ENCODE measurements at regions of chr9 and their contacts with region 1.

Region 1: DNA sequence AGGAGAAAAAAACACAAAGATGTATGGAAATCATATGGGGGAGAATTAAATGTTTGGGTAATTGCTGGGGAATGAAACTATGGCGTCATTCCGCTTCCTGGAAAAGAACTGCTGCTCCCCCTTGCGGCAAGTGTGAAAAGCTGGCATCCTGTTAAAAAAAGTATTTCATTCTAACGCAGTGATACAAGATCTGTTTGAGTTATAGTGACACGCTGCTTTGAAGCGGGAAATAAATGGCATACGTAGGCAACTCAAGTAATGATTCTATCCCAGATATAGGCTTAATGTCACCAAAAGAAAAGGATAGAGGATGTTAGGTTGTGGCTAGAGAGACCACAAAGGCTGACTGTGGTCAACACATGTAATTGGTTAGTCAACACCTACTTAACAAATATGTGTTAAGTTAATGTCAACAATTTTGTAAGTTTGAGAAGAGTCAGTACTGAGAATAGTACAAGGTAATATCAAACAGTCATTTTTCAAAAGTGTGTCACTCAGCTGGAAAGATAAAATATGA is 70.2 kb upstream of the ALDH1A1 start:
- DNase-seq: no peak
- H3K4me3 Mint-ChIP-seq: no peak overlapping the region
- H3K27ac Mint-ChIP-seq: no peak overlapping the region
- H3K4me1 Mint-ChIP-seq: peaks cover 10% of the 10 kb centered on the region
- H3K27me3 Mint-ChIP-seq: peaks cover 11% of the 10 kb centered on the region

Region 2: DNA sequence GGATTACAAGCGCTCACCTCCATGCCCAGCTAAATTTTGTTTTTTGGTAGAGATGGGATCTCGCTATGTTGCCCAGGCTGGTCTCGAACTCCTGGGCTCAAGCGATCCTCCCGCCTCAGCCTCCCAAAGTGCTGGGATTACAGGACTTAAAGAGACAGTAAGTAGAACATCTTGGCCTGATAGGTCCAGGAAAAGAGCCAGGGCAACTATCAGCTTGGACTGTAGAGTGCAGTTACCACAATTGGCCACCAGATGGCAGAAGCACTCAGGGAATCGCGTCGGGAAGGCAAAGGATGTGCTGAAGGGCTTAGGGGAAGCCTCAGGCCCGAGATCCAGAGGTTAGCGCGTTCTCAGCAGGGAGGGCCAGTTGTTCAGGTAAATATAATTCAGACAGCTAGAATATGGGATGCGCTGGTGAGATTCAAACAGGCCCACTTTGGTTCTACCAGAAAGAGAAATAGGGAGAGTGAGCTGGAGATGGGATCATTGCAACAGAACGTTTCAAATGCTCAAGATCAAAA is 984.1 kb before region 1 on chr9:
- intact Hi-C with region 1: loop called (anchors 5 kb)
- DNase-seq: peak; percentile 36
- H3K4me3 Mint-ChIP-seq: no peak overlapping the region
- H3K27ac Mint-ChIP-seq: no peak overlapping the region
- H3K4me1 Mint-ChIP-seq: peaks cover 6% of the 10 kb centered on the region
- H3K27me3 Mint-ChIP-seq: peaks cover 11% of the 10 kb centered on the region

Region 3: DNA sequence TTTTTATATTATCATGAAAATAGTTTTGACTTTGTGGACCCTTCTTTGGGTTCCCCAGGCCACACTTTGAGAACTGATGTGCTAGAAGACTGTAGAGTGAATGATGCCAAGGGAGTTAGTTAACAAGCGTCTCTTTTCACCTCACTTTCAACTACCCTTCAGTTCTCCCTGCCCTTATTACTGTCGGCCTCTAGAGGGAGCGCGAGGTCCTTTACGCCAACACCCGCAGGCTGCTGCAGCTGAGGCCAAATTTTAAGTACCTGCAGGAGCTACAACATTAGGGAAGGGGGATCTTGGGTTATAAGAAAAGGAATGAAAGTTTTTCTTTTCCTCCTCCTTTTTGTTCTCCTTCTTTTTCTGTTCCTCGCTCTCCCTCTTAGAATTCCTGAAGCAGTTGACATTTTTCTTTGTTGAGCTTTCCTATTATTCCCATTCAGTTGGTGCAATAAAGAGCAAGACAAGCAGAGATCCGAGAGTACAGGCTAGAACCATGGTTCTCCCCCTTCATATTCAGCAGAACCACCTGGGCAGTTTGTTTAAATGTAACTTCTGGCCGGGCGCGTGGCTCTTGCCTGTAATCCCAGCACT is 742.1 kb before region 1 on chr9:
- intact Hi-C with region 1: loop called (anchors 1 kb)
- DNase-seq: peak; percentile 52
- H3K4me3 Mint-ChIP-seq: no peak overlapping the region
- H3K27ac Mint-ChIP-seq: peak overlapping the region; percentile 36
- H3K4me1 Mint-ChIP-seq: no peaks in the 10 kb centered on the region
- H3K27me3 Mint-ChIP-seq: peaks cover 6% of the 10 kb centered on the region

Region 4: GRCh38 chr9:72856972-72857623 is 166.0 kb before region 1 on chr9:
- intact Hi-C with region 1: loop called (anchors 5 kb)
- DNase-seq: no peak
- H3K4me3 Mint-ChIP-seq: no peak overlapping the region
- H3K27ac Mint-ChIP-seq: no peak overlapping the region
- H3K4me1 Mint-ChIP-seq: no peaks in the 10 kb centered on the region
- H3K27me3 Mint-ChIP-seq: peaks cover 4% of the 10 kb centered on the region

Measured in activated T-helper 1 cell treated with anti-CD3 and anti-CD28 coated beads, Interleukin-12 subunit alpha, Interleukin-12 subunit beta, Interleukin-2, Interleukin-4 antibody, amounts not matched to agents 30 ng/mL and 10 ng/mL and 1 ng/mL, durations not matched to agents 14 hours and 24 hours and 36 hours (primary cell).